ENCODE measurements at regions of chr13 and their contacts with region 1.

Region 1: DNA sequence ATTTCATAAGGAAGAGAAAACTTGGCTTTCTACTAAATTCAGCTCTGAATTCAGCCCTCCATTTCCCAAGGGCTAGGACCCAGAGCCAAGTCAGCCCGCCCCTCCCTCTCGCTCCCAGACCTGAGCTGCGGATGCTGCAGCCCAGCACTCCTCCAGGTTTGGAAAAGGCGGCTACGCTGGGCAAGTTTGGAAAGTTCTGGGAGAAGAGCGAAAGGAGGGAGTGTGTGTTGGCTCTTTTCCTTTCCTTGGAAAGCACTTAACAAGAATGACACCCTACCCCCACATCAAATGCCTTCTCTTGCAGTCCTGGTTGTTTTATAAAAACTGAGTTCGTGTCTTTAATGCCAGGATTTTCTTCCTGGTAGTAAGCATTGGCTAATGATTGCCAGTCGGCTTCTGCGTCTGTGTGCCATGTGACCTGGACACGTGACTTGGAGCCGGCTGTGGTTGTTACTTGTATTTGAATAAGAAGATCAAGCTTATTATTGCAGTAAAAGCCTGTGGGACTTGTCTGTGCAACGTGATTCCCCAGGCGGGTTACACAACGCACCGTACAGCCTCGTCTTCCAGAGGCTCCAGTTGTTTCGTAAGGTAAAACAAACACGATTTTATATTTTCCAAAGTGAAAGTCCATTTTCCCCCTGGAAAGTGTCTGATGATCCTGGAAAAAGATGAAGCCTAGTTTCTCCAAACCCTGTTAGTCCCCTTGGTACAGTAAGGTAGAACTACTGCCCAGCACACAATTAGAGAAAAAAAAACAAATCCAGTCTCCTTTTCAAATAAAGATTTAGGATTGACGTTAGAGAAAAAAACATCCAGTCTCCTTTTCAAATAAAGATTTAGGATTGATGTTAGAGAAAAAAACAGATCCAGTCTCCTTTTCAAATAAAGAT is 26.9 kb upstream of the UBE2L5 start:
- DNase-seq: peak; percentile 85
- H3K4me3 Mint-ChIP-seq: peak overlapping the region; percentile 76
- H3K27ac Mint-ChIP-seq: peak overlapping the region; percentile 97
- H3K4me1 Mint-ChIP-seq: peaks cover 52% of the 10 kb centered on the region
- H3K27me3 Mint-ChIP-seq: no peaks in the 10 kb centered on the region

Region 2: GRCh38 chr13:30408319-30409101 is 13.1 kb after region 1 on chr13:
- CTCF ChIA-PET with region 1: interaction called, 20 read pairs
- DNase-seq: peak; percentile 94
- H3K4me3 Mint-ChIP-seq: peak overlapping the region; percentile 39
- H3K27ac Mint-ChIP-seq: peak overlapping the region; percentile 68
- H3K4me1 Mint-ChIP-seq: peaks cover 37% of the 10 kb centered on the region
- H3K27me3 Mint-ChIP-seq: peaks cover 16% of the 10 kb centered on the region